ENCODE measurements at regions of chr3 and their contacts with region 1.

Region 1: DNA sequence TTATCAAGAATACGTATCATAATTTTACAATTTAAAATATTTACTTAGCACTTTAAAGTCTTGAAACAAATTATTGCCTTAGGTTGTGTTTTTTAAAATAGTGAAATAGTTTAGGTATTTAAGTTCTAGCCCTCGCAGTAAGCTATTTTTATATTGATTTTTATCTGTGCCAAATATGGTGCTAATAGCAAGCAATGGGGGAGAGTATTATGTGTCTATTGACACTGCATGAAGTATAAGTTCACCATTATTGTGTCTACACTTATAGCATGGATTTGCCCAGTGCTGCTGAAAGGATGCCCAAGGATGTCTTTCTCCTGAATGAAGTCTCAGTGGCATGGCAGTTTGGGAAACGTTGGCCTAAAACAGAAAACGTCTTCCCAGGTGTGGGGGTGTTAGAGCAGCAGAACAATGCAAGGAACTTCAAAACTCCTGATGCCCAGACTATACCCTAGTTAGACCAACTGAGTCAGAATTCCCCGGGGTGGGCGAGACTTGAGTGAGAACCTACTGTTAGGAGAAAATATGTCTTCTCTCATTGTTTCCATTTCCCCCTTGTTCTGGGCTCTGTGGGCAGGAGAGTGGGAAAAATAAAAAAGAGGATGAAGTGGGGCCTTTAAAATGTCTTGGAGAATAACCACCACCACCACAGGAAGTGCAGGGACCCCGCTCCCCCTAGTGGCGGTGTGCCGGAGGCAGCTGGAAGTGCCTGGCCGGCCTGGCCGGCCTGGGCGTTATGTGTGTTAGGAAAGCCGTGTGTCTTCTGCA is 104.2 kb upstream of the SLC7A14 start:
- DNase-seq: peak; percentile 63 to 77
- H3K4me3 ChIP-seq: no peak overlapping the region
- H3K4me3 Mint-ChIP-seq: no peak overlapping the region
- H3K27ac Mint-ChIP-seq: peak overlapping the region; percentile 80
- H3K4me1 ChIP-seq: peaks cover 25% of the 10 kb centered on the region
- H3K4me1 Mint-ChIP-seq: peaks cover 7% of the 10 kb centered on the region
- H3K27me3 ChIP-seq: no peaks in the 10 kb centered on the region
- H3K27me3 Mint-ChIP-seq: no peaks in the 10 kb centered on the region
- CTCF ChIP-seq: peak; percentile 82 to 89

Region 2: DNA sequence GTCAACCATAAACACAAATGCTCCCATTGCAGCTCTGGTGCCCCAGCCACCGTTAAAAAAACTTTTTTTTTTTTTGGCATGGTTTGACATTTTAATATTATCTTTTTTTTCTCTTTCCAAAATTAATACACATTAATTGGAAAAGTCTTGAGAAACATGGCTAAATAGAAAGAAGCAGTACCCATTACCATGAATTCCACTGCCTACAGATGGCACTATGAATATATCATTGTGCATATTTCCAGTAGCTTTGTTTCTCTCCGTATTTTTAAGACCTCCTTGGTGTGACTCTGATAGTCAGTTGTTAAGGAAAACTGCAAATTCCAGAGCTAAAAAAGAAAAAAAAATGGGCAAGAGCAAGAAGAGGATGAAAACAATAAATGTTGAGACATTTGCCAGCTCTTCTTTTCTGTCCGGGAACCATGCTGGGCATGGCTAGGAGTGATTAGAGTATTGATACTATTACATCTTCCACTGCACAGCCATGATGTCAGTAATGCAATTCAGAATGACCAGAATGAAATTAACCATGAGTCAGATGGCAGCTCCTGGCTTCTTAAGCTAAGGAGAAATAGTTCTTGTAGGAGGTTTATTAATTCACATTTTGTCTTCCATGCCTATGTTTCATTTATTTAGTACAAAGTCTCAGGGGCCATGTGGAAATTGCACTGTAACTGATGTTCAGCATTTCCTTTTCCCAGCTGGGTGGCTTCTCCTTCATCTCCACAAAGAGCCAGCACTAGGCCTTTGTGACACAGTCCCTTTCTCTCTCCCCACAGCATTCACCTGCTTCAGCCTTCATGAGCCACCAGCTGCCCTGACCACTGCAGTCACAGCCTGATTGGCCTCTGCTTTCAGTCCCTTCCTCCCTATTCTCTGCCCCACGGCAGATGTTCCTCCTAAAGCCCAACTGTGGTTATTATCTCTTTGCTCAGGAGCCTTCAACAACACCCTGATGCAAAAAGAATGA is 136.0 kb before region 1 on chr3:
- CTCF ChIA-PET with region 1: interaction called, 4 read pairs
- POLR2A ChIA-PET with region 1: no interaction called
- intact Hi-C with region 1: loop called (anchors 2 kb)
- DNase-seq: no peak
- H3K4me3 ChIP-seq: no peak overlapping the region
- H3K4me3 Mint-ChIP-seq: no peak overlapping the region
- H3K27ac Mint-ChIP-seq: no peak overlapping the region
- H3K4me1 ChIP-seq: no peaks in the 10 kb centered on the region
- H3K4me1 Mint-ChIP-seq: no peaks in the 10 kb centered on the region
- H3K27me3 ChIP-seq: no peaks in the 10 kb centered on the region
- H3K27me3 Mint-ChIP-seq: peaks cover 9% of the 10 kb centered on the region
- CTCF ChIP-seq: no peak

Region 3: GRCh38 chr3:171088964-171089754 is 399.1 kb after region 1 on chr3:
- CTCF ChIA-PET with region 1: no interaction called
- POLR2A ChIA-PET with region 1: no interaction called
- intact Hi-C with region 1: no loop called
- DNase-seq: peak in 1 of 2 experiments; percentile 14
- H3K4me3 ChIP-seq: no peak overlapping the region
- H3K4me3 Mint-ChIP-seq: no peak overlapping the region
- H3K27ac Mint-ChIP-seq: peak overlapping the region; percentile 16
- H3K4me1 ChIP-seq: peaks cover 22% of the 10 kb centered on the region
- H3K4me1 Mint-ChIP-seq: peaks cover 17% of the 10 kb centered on the region
- H3K27me3 ChIP-seq: no peaks in the 10 kb centered on the region
- H3K27me3 Mint-ChIP-seq: no peaks in the 10 kb centered on the region
- CTCF ChIP-seq: no peak

Measured in Caco-2 (cell line).